ENCODE measurements at regions of chr5 and their contacts with region 1.

Region 1: DNA sequence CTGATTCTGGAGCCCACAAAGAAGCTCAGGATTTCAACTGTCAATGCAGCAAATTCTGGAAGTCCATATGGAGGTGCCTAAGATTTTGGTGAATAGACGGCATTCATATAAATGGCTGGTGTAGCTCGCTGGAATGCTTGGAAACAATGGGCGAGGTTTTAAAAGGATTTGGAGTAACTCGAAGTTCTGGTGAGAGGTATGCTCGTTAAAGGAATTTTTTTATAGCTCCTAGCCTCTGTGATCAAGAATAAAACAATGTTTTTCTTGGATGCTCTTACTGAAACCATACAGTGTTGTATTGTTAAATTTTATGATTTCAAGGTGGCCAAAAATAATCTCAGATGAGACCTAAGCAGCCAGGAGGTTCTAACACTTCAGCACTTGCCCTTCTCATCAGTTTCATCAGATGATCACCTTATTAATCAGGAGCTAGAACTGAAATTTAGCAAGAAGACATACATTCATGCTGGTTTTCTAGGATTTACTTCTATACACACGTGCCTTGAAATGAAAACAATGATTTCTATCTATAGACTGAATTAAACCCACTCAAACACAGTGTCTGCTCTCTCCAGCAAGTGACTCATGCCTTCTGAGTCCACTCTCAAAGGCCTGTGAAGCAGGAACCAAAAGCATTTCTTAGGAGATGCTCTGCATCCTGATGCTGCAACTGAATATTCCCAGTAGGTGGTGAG is 79.2 kb downstream of the OTULIN start:
- DNase-seq: no peak
- ATAC-seq: peak; percentile 32; the same call in 2 of the 3 replicates
- H3K4me3 ChIP-seq: no peak overlapping the region
- H3K27ac ChIP-seq: no peak overlapping the region
- H3K4me1 ChIP-seq: peaks cover 13% of the 10 kb centered on the region
- H3K27me3 ChIP-seq: no peaks in the 10 kb centered on the region
- CTCF ChIP-seq: no peak
- EP300 ChIP-seq: no peak
- POLR2A ChIP-seq: no peak
- RAD21 ChIP-seq: no peak

Region 2: GRCh38 chr5:14871210-14872069 is 127.7 kb after region 1 on chr5 and contains the start of gene ANKH:
- CTCF ChIA-PET with region 1: interaction called, 3 read pairs
- POLR2A ChIA-PET with region 1: no interaction called
- RAD21 ChIA-PET with region 1: no interaction called
- SMC1A ChIA-PET with region 1: interaction called, 3 read pairs
- in situ Hi-C with region 1: no loop called
- intact Hi-C with region 1: loop called (anchors 5 kb)
- DNase-seq: no peak
- ATAC-seq: peak; percentile 86
- H3K4me3 ChIP-seq: peak within 1 kb of the TSS; percentile 77
- H3K27ac ChIP-seq: no peak within 1 kb of the TSS; the same call in 1 of the 2 replicates
- H3K4me1 ChIP-seq: no peaks in the 10 kb centered on the region
- H3K27me3 ChIP-seq: no peaks in the 10 kb centered on the region
- CTCF ChIP-seq: peak in 2 of 3 experiments; percentile 38 to 57; a peak in 3 of 6 replicates
- EP300 ChIP-seq: no peak
- POLR2A ChIP-seq: peak; percentile 32; the same call in 1 of the 2 replicates
- RAD21 ChIP-seq: peak; percentile 42
- polyA plus RNA-seq, gene ANKH: 3.8 to 5.1 TPM

Measured in GM12878 (cell line).